Psoas muscle (tissue), 8 donors: ENCODE measurements at regions of chr17 and their contacts with region 1.

Region 1: GRCh38 chr17:60792250-60792898 is 114.7 kb downstream of the BCAS3 start:
- DNase-seq: peak; percentile 16 to 53
- ATAC-seq: peak; percentile 34 to 92 (median 86)
- H3K4me3 ChIP-seq: no peak overlapping the region
- H3K27ac ChIP-seq: peak overlapping the region; percentile 12
- H3K4me1 ChIP-seq: no peaks in the 10 kb centered on the region
- H3K27me3 ChIP-seq: no peaks in the 10 kb centered on the region
- CTCF ChIP-seq: no peak

Region 2: GRCh38 chr17:60506312-60506711 is 286.1 kb before region 1 on chr17:
- intact Hi-C with region 1: no loop called
- DNase-seq: no peak
- ATAC-seq: peak; percentile 66 to 75 (median 68)
- H3K4me3 ChIP-seq: no peak overlapping the region
- H3K27ac ChIP-seq: peak overlapping the region; percentile 58
- H3K4me1 ChIP-seq: peaks cover 39% of the 10 kb centered on the region
- H3K27me3 ChIP-seq: no peaks in the 10 kb centered on the region
- CTCF ChIP-seq: no peak

Region 3: DNA sequence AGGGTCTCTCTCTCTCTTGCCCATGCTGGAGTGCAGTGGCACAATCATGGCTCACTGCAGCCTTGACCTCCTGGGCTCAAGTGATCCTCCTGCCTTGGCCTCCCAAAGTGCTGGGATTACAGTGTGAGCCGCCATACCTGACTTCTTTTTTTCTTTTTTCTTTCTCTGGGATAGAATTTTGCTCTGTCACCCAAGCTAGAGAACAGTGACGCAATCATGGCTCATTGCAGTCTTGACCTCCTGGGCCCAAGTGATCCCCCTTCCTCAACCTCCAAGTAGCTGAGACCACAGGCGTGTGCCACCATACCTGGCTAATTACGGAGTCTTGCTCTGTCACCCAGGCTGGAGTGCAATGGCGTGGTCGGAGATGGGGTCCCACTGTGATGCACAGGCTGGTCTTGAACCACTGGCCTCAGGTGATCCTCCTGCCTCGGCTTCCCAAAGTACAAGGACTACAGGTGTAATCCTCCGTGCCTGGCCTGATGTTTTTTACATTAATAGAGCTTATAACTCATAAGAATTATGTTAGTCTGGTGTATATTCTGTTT is 38.2 kb before region 1 on chr17:
- intact Hi-C with region 1: no loop called
- DNase-seq: no peak
- ATAC-seq: no peak
- H3K4me3 ChIP-seq: no peak overlapping the region
- H3K27ac ChIP-seq: no peak overlapping the region
- H3K4me1 ChIP-seq: no peaks in the 10 kb centered on the region
- H3K27me3 ChIP-seq: no peaks in the 10 kb centered on the region
- CTCF ChIP-seq: no peak

Region 4: GRCh38 chr17:60989379-60989778 is 197.0 kb after region 1 on chr17:
- intact Hi-C with region 1: loop called in 1 of 2 experiments (anchors 5 kb)
- DNase-seq: no peak
- ATAC-seq: no peak
- H3K4me3 ChIP-seq: no peak overlapping the region
- H3K27ac ChIP-seq: no peak overlapping the region
- H3K4me1 ChIP-seq: no peaks in the 10 kb centered on the region
- H3K27me3 ChIP-seq: no peaks in the 10 kb centered on the region
- CTCF ChIP-seq: no peak